Aorta (tissue), 5 donors: ENCODE measurements at regions of chr5 and their contacts with region 1.

Region 1: DNA sequence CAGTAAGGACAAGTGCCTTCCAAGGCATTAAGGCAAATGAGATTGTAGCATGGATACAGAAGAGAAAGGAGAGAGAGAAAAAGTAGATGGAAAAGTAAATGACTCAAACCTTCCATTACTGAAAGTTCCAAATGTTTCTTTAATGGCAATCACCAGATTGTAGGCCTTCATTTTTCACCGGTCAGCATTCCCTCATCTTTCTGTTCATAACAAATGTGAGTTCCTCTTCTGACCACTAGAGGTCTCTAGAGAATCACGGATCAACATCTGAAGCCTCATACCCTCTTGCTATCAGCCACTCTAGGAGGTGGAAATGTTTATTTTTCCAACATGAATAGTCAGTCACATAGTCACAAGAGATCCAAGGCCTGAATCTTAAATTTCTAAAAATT is 73.6 kb upstream of the RPS23 start:
- DNase-seq: no peak
- ATAC-seq: peak; percentile 83
- H3K4me3 ChIP-seq: no peak overlapping the region
- H3K27ac ChIP-seq: peak overlapping the region in 1 of 2 donors; percentile 64
- H3K4me1 ChIP-seq: peaks cover 2 to 6% of the 10 kb centered on the region in 2 donors
- H3K27me3 ChIP-seq: no peaks in the 10 kb centered on the region

Region 2: DNA sequence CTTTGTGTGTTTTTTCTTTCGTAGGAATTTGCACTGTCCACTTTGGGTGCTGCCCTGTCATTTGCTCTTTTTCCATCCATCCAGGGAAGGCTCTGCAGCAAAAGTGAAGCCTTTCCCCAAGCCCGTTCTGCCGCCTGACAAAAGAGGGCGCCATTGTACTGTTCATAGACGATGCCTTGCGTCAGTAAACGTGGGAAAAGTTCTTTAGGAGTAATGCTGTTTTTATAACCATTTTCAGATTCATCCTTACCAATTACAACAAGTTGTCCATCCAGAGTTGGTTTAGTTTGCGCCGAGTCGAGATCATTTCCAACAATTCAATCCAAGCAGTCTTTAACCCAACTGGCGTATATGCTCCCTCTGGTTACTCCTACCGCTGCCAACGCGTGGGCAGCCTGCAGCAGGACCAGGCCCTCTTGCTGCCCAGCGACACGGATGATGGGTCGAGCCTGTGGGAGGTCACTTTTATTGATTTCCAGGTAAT is 39.3 kb before region 1 on chr5:
- intact Hi-C with region 1: loop called (anchors 2 to 5 kb)
- DNase-seq: peak; percentile 75 to 87
- ATAC-seq: peak; percentile 88
- H3K4me3 ChIP-seq: peak overlapping the region; percentile 5 to 32
- H3K27ac ChIP-seq: peak overlapping the region; percentile 33 to 77
- H3K4me1 ChIP-seq: peaks cover under 1 to 4% of the 10 kb centered on the region in 2 donors
- H3K27me3 ChIP-seq: no peaks in the 10 kb centered on the region

Region 3: DNA sequence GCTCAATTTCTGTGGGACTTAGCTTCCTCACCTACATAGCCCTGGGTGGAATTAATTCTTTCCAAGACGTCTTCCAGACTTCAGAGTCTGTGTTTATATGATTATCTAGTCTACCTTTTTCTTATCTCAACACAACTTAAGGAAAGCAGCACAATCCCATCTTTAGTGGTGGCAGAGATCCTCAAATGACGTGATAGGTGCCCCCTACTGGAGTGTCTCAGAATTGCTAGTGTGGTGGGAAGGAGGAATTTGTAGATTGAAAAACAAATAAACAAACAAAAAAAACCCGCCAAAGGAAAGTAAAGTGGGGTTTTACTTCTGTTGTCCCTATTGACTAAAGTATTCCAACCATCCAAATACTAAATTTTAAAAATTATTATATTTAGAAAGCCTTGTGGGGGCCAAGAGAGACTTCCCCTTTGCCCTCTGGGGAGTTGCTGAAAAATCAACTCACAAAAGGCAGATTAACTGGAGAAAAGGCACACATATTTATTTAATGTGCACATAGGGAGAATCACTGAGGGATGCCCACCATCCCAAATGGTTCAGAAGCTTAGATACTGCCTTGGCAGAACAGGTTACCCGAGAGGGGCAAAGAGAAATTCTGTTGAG is 442.2 kb after region 1 on chr5:
- intact Hi-C with region 1: loop called in 1 of 2 experiments (anchors 5 kb)
- DNase-seq: no peak
- ATAC-seq: no peak
- H3K4me3 ChIP-seq: no peak overlapping the region
- H3K27ac ChIP-seq: no peak overlapping the region
- H3K4me1 ChIP-seq: no peaks in the 10 kb centered on the region
- H3K27me3 ChIP-seq: no peaks in the 10 kb centered on the region